Calu3 (cell line): ENCODE measurements at regions of chr1 and their contacts with region 1.

Region 1: GRCh38 chr1:87093286-87093685 is 178.9 kb downstream of the HS2ST1 start:
- DNase-seq: no peak
- H3K4me3 Mint-ChIP-seq: no peak overlapping the region
- H3K27ac Mint-ChIP-seq: peak overlapping the region; percentile 38
- H3K4me1 Mint-ChIP-seq: peaks cover 26% of the 10 kb centered on the region
- H3K27me3 Mint-ChIP-seq: no peaks in the 10 kb centered on the region
- CTCF ChIP-seq: no peak

Region 2: DNA sequence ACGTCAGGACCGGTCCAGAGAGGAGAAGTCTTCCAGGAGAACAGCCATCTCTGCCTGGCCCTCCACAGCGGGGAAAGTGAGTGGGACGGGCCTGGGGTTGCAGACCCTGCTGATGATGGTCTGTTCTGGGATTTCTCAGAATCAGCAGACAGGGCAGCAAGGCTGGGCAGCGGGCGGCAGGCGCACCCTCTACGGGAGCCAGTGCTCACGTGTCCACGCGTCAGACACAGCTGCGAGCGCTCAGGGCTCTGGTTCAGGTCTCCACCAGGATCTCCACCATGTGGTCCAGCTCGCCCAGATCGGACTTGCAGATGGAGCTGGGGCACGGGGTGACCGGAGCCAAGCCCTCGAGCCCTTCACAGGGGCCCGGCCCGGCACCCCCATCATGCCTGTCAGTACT is 540.9 kb before region 1 on chr1:
- CTCF ChIA-PET with region 1: no interaction called
- intact Hi-C with region 1: no loop called
- DNase-seq: no peak
- H3K4me3 Mint-ChIP-seq: no peak overlapping the region
- H3K27ac Mint-ChIP-seq: no peak overlapping the region
- H3K4me1 Mint-ChIP-seq: peaks cover 16% of the 10 kb centered on the region
- H3K27me3 Mint-ChIP-seq: no peaks in the 10 kb centered on the region
- CTCF ChIP-seq: no peak

Region 3: GRCh38 chr1:86887479-86888162 is 205.7 kb before region 1 on chr1:
- CTCF ChIA-PET with region 1: no interaction called
- intact Hi-C with region 1: loop called (anchors 10 kb)
- DNase-seq: no peak
- H3K4me3 Mint-ChIP-seq: no peak overlapping the region
- H3K27ac Mint-ChIP-seq: no peak overlapping the region
- H3K4me1 Mint-ChIP-seq: no peaks in the 10 kb centered on the region
- H3K27me3 Mint-ChIP-seq: no peaks in the 10 kb centered on the region
- CTCF ChIP-seq: no peak

Region 4: DNA sequence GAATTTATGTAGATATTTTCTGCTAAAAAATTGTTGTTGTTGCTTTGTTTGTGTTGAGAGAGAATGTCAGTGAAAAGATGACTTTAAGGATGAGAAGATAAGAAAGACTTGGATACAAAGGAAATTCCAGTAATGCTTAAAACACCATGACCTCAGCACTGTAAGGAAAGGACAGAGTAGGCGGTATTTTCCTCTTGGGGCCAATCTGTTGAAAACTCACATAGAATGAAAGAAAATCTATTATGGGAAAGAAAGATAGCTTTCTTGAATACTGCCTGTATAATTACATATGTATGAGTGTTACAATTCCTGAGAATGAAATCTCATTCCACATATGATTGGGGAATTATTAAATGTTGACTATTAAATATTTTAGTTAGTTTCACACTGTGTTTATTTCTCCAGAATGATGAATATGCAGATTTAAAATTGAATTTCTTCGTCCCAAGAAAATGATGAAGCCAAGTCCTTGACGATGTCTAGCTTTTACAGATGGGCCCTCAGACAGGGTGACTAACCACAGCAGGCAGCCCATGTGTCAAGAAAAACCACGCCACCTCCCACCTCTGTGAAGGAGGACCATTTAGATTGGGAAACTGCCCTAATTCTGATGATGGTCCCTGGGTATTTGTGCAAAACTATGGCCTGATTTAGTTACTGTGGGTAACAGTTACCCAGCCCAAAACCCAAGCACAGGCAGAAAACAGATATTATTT is 185.7 kb after region 1 on chr1:
- CTCF ChIA-PET with region 1: no interaction called
- intact Hi-C with region 1: no loop called
- DNase-seq: no peak
- H3K4me3 Mint-ChIP-seq: no peak overlapping the region
- H3K27ac Mint-ChIP-seq: no peak overlapping the region
- H3K4me1 Mint-ChIP-seq: no peaks in the 10 kb centered on the region
- H3K27me3 Mint-ChIP-seq: no peaks in the 10 kb centered on the region
- CTCF ChIP-seq: no peak

Region 5: GRCh38 chr1:87318056-87318650 is 224.9 kb after region 1 on chr1:
- CTCF ChIA-PET with region 1: no interaction called
- intact Hi-C with region 1: no loop called
- DNase-seq: no peak
- H3K4me3 Mint-ChIP-seq: no peak overlapping the region
- H3K27ac Mint-ChIP-seq: no peak overlapping the region
- H3K4me1 Mint-ChIP-seq: peaks cover 7% of the 10 kb centered on the region
- H3K27me3 Mint-ChIP-seq: no peaks in the 10 kb centered on the region
- CTCF ChIP-seq: no peak